ENCODE measurements at regions of chr11 and their contacts with region 1.

Region 1: GRCh38 chr11:108853864-108854263 is 189.0 kb downstream of the DDX10 start:
- DNase-seq: no peak
- H3K4me3 Mint-ChIP-seq: peak overlapping the region; percentile 18
- H3K27ac Mint-ChIP-seq: peak overlapping the region; percentile 4
- H3K4me1 Mint-ChIP-seq: peaks cover 25% of the 10 kb centered on the region
- H3K27me3 Mint-ChIP-seq: no peaks in the 10 kb centered on the region

Region 2: DNA sequence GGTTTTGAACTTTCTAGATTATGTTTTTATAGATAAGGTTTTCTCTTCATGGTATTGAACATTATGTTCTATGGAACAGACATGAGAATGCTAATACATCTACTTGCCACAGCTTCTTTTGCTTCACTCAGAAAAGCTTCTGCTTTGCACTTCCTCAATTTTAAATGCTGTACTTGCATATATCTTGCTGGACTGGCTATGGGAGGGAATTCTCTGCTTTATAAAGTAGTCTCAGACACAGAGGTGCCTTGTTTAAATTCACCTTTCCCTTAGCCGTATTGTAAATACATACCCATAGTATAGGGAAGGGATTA is 15.1 kb before region 1 on chr11:
- CTCF ChIA-PET with region 1: no interaction called
- POLR2A ChIA-PET with region 1: no interaction called
- intact Hi-C with region 1: loop called (anchors 2 kb)
- DNase-seq: no peak
- H3K4me3 Mint-ChIP-seq: no peak overlapping the region
- H3K27ac Mint-ChIP-seq: no peak overlapping the region
- H3K4me1 Mint-ChIP-seq: peaks cover 7% of the 10 kb centered on the region
- H3K27me3 Mint-ChIP-seq: no peaks in the 10 kb centered on the region